SK-N-SH (cell line): ENCODE measurements at regions of chr20 and their contacts with region 1.

Region 1: DNA sequence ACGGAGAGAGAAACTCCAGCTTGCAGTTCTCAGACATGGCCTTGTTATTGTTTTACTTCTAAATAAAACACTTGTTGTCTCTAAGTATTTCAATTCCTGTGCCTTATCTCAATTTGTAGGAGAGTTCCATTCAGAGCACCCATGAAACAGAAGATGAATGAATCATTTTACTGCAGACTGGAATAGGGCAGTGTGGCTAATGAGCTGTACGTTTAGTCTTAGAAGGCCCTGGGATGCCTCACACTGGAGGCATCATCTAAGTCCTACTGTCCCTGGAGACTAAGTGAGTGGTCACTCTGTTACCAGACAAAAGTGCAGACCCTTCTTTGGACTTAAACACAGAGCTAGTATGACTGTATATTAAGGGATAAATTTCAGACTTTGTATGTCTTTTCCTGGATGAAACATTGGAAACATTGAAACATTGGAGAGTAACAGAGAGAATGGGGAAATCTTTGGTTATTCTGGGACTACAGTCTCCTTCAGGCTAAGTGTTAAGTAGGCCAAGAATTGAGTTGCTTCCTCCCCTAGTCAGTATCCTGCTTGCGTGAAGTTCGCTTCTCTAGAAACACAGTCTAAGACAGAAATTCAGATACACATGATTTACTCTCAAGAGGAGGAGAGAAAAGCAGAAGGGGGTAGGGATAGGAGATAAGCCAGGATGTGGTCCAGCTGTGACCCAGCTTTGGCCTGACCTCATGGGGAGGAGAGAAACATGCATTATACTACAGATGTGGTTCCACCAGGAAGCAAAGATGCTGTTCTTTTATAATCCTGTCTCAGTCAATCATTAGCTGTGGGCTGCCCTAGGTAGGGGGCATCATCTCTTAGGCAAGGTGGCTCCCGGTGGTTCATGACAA is 167.4 kb upstream of the BMP2 start:
- DNase-seq: no peak
- H3K4me3 ChIP-seq: no peak overlapping the region
- H3K27ac ChIP-seq: no peak overlapping the region
- H3K4me1 ChIP-seq: no peaks in the 10 kb centered on the region
- H3K27me3 ChIP-seq: no peaks in the 10 kb centered on the region
- CTCF ChIP-seq: no peak
- EP300 ChIP-seq: no peak
- RAD21 ChIP-seq: no peak

Region 2: DNA sequence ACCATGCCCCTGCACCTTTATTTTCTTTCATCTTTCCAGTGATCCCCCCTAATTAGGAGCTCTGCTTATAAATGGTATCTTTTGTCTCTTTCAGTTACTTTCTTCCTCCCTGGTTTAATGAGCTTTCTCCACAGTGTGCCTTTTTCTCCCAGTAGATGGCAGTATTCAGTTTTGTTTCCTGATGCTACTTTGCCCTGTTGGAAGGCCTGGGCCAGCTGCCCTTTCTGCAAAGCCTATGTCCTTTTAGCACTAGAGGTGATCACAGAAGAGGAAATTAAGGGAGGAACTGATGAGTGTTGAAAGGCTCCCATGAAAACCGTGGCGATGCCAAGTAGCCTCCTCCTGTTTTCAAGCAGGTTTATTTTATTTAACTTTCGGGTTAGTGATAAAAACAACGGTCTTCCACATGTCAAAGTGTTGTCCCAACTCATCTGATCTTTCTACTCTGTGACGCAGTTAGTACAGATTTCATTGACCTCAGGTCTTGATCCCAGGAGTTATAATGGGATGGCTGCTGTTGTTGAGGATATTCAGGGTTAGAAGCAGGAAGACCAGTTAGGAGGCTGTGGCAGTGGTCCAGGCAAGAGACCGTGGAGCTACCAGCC is 16.9 kb before region 1 on chr20:
- CTCF ChIA-PET with region 1: interaction called, 14 read pairs
- POLR2A ChIA-PET with region 1: no interaction called
- DNase-seq: peak; percentile 26
- H3K4me3 ChIP-seq: no peak overlapping the region; a peak in 1 of 4 replicates
- H3K27ac ChIP-seq: no peak overlapping the region
- H3K4me1 ChIP-seq: no peaks in the 10 kb centered on the region
- H3K27me3 ChIP-seq: no peaks in the 10 kb centered on the region
- CTCF ChIP-seq: peak; percentile 62
- EP300 ChIP-seq: no peak
- RAD21 ChIP-seq: peak; percentile 59

Region 3: GRCh38 chr20:6623989-6624388 is 23.9 kb after region 1 on chr20:
- CTCF ChIA-PET with region 1: no interaction called
- POLR2A ChIA-PET with region 1: no interaction called
- DNase-seq: no peak
- H3K4me3 ChIP-seq: no peak overlapping the region
- H3K27ac ChIP-seq: no peak overlapping the region
- H3K4me1 ChIP-seq: no peaks in the 10 kb centered on the region
- H3K27me3 ChIP-seq: no peaks in the 10 kb centered on the region; the same call in 1 of the 2 replicates
- CTCF ChIP-seq: no peak
- EP300 ChIP-seq: no peak
- RAD21 ChIP-seq: no peak